Calu3 (cell line): ENCODE measurements at regions of chr1 and their contacts with region 1.

Region 1: DNA sequence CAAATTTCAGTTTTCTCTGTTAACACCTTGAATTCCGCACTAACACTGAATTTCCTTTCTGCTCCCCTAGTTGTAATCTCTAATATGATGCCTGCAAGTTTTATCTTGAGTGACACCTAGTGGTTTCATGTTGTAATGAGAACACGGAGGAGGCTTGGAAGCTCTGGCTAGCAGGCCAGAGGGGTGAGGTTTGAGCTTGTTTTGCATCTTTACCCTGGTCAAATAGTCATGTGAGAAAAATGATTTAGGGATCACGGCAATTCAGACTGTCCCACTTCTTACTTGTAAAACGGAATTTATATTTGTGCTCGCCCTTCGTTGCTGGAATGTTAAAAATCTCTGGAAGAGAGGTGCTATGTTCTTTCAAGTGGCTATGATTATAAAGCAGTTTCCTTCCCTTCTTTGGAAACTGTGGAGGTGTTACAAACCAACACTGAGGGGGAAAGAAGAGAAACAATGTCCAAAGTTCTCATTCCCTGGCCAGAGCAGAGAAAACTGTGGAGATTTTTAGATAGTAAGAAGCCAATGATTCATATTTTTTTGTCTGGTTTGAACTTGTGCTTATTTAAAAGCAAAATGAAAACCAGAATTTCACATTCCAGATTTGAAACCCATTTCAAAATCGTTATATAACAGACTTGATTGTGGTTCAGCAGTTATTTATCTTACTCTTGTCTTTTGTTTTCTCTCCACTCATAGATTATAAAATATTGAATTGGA is 5.3 kb upstream of the MROH9 start:
- DNase-seq: peak; percentile 38
- H3K4me3 Mint-ChIP-seq: no peak overlapping the region
- H3K27ac Mint-ChIP-seq: no peak overlapping the region
- H3K4me1 Mint-ChIP-seq: no peaks in the 10 kb centered on the region
- H3K27me3 Mint-ChIP-seq: no peaks in the 10 kb centered on the region
- CTCF ChIP-seq: peak; percentile 73

Region 2: DNA sequence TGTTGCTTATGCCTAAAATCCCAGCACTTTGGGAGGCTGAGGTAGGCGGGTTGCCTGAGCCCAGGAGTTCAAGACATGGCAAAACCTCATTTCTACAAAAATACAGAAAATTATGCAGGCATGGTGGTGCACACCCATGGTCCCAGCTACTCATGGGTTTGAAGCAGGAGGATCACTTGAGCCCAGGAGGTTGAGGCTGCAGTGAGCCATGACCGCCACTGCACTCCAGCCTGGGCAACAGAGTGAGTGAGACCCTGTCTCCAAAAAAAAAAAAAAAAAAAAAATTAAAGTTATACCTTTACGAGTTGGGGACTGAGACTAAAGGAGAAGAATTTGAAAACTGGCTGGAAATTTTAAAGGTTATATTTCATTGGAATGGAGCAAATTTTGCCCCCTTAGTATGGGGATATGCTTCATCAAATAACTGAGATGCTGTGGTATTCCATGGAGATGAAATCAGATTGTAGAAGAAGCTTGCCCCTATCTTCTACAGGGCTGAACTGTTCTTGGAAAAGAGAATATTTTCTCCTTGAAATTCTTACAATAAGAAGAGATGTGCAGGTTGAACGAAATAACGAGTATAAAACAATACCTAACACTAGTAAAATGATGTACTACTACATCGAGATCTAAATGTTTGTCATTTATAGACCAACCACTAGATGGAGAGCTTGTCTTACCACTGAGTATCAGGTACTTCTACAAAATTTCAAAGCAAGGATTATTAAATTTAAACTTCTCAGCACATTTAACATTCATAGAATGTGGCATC is 1001.4 kb before region 1 on chr1:
- CTCF ChIA-PET with region 1: interaction called, 3 read pairs
- intact Hi-C with region 1: loop called (anchors 1 kb)
- DNase-seq: no peak
- H3K4me3 Mint-ChIP-seq: no peak overlapping the region
- H3K27ac Mint-ChIP-seq: no peak overlapping the region
- H3K4me1 Mint-ChIP-seq: peaks cover 15% of the 10 kb centered on the region
- H3K27me3 Mint-ChIP-seq: no peaks in the 10 kb centered on the region
- CTCF ChIP-seq: peak; percentile 53

Region 3: DNA sequence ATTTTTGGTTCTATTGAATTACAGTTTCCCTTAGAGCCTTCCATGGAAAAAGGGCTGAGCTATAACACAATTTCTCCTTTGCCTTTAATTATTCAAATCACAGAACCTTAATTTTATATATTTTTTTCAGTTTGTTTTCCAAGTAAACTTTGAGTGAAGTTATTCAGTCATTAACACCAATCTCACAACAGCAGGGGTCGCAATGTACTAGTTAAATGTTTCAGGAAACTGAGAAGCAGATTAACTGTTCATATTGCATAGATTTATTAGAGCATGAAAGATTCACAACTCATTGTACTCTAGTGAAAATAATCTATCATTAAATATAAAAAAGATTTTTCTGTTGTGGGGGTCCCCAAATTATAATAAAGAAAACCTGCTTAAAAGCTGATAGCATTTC is 919.6 kb before region 1 on chr1:
- CTCF ChIA-PET with region 1: no interaction called
- intact Hi-C with region 1: loop called (anchors 1 kb)
- DNase-seq: peak; percentile 65
- H3K4me3 Mint-ChIP-seq: no peak overlapping the region
- H3K27ac Mint-ChIP-seq: no peak overlapping the region
- H3K4me1 Mint-ChIP-seq: no peaks in the 10 kb centered on the region
- H3K27me3 Mint-ChIP-seq: no peaks in the 10 kb centered on the region
- CTCF ChIP-seq: peak; percentile 46

Region 4: GRCh38 chr1:170692866-170693575 is 237.0 kb before region 1 on chr1:
- CTCF ChIA-PET with region 1: interaction called, 6 read pairs
- intact Hi-C with region 1: loop called (anchors 1 kb)
- DNase-seq: no peak
- H3K4me3 Mint-ChIP-seq: no peak overlapping the region
- H3K27ac Mint-ChIP-seq: peak overlapping the region; percentile 27
- H3K4me1 Mint-ChIP-seq: peaks cover 20% of the 10 kb centered on the region
- H3K27me3 Mint-ChIP-seq: no peaks in the 10 kb centered on the region
- CTCF ChIP-seq: no peak

Region 5: DNA sequence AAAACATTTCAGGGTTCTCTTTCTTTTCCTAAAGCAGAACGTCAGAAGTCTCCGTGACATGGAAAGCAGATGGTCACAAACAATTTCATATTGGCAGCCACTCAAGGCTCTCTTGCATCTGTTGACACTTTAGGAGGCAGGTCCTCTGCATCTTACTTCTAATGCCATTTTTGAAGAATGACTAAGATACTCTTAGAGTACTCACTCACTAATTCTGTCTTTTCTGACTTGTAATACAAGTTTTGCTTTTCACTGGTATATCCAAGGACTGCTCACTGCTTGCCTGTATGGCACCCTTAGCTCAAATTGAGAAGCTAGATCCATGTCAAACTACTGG is 197.8 kb before region 1 on chr1:
- CTCF ChIA-PET with region 1: no interaction called
- intact Hi-C with region 1: no loop called
- DNase-seq: no peak
- H3K4me3 Mint-ChIP-seq: no peak overlapping the region
- H3K27ac Mint-ChIP-seq: no peak overlapping the region
- H3K4me1 Mint-ChIP-seq: peaks cover 11% of the 10 kb centered on the region
- H3K27me3 Mint-ChIP-seq: no peaks in the 10 kb centered on the region
- CTCF ChIP-seq: no peak

Region 6: GRCh38 chr1:171048014-171048413 is 118.0 kb after region 1 on chr1:
- CTCF ChIA-PET with region 1: no interaction called
- intact Hi-C with region 1: no loop called
- DNase-seq: no peak
- H3K4me3 Mint-ChIP-seq: no peak overlapping the region
- H3K27ac Mint-ChIP-seq: no peak overlapping the region
- H3K4me1 Mint-ChIP-seq: no peaks in the 10 kb centered on the region
- H3K27me3 Mint-ChIP-seq: no peaks in the 10 kb centered on the region
- CTCF ChIP-seq: no peak